WTC11 (cell line): ENCODE measurements at regions of chr14 and their contacts with region 1.

Region 1: GRCh38 chr14:101961011-101961721 is 3.2 kb upstream of the DYNC1H1 start:
- DNase-seq: peak; percentile 82
- ATAC-seq: peak; percentile 25
- H3K4me3 Mint-ChIP-seq: no peak overlapping the region; the same call in 1 of the 2 replicates
- H3K27ac Mint-ChIP-seq: no peak overlapping the region
- H3K4me1 Mint-ChIP-seq: peaks cover 24% of the 10 kb centered on the region
- H3K27me3 Mint-ChIP-seq: peaks cover 39% of the 10 kb centered on the region
- CTCF ChIP-seq: peak; percentile 82

Region 2: GRCh38 chr14:101854366-101854765 is 106.8 kb before region 1 on chr14:
- CTCF ChIA-PET with region 1: no interaction called
- POLR2A ChIA-PET with region 1: no interaction called
- DNase-seq: no peak
- ATAC-seq: no peak; the same call in 1 of the 2 replicates
- H3K4me3 Mint-ChIP-seq: no peak overlapping the region
- H3K27ac Mint-ChIP-seq: peak overlapping the region; percentile 60; the same call in 1 of the 2 replicates
- H3K4me1 Mint-ChIP-seq: peaks cover 14% of the 10 kb centered on the region
- H3K27me3 Mint-ChIP-seq: no peaks in the 10 kb centered on the region
- CTCF ChIP-seq: no peak

Region 3: GRCh38 chr14:101947906-101948665 is 13.1 kb before region 1 on chr14:
- CTCF ChIA-PET with region 1: interaction called, 13 read pairs
- POLR2A ChIA-PET with region 1: interaction called, 6 read pairs
- DNase-seq: peak; percentile 100
- ATAC-seq: peak; percentile 96
- H3K4me3 Mint-ChIP-seq: peak overlapping the region; percentile 96
- H3K27ac Mint-ChIP-seq: peak overlapping the region; percentile 99
- H3K4me1 Mint-ChIP-seq: peaks cover 24% of the 10 kb centered on the region
- H3K27me3 Mint-ChIP-seq: peaks cover 50% of the 10 kb centered on the region
- CTCF ChIP-seq: no peak